WTC11 (cell line): ENCODE measurements at regions of chr17 and their contacts with region 1.

Region 1: DNA sequence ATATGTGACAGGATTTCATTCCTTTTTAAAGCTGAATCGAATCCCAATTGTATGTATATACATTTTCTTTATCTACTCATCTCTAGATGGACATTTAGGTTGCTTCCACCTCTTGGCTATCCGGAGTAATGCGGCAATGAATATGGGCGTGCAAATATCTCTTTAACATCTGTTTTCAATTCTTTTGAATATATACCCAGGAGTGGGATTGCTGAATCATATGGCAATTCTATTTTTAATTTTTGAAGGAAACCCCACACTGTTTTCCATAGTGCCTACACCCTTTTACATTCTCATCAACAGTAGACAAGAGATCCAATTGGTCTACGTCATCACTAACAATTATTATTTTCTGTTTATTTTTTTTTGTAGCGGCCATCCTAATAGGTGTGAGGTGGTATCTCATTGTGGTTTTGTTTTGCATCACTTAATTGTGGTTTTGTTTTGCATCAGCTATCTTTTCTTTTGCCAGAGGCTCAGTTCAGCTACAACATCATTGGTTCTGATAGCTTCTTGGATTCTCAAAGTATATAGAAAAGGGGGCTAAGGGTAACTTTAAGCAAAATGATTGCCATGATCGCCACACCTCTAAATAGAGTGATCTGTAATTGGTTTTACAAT is 25.6 kb upstream of the MAP2K6 start:
- DNase-seq: no peak
- ATAC-seq: no peak
- H3K4me3 Mint-ChIP-seq: no peak overlapping the region
- H3K27ac Mint-ChIP-seq: no peak overlapping the region
- H3K4me1 Mint-ChIP-seq: no peaks in the 10 kb centered on the region
- H3K27me3 Mint-ChIP-seq: no peaks in the 10 kb centered on the region
- CTCF ChIP-seq: no peak

Region 2: DNA sequence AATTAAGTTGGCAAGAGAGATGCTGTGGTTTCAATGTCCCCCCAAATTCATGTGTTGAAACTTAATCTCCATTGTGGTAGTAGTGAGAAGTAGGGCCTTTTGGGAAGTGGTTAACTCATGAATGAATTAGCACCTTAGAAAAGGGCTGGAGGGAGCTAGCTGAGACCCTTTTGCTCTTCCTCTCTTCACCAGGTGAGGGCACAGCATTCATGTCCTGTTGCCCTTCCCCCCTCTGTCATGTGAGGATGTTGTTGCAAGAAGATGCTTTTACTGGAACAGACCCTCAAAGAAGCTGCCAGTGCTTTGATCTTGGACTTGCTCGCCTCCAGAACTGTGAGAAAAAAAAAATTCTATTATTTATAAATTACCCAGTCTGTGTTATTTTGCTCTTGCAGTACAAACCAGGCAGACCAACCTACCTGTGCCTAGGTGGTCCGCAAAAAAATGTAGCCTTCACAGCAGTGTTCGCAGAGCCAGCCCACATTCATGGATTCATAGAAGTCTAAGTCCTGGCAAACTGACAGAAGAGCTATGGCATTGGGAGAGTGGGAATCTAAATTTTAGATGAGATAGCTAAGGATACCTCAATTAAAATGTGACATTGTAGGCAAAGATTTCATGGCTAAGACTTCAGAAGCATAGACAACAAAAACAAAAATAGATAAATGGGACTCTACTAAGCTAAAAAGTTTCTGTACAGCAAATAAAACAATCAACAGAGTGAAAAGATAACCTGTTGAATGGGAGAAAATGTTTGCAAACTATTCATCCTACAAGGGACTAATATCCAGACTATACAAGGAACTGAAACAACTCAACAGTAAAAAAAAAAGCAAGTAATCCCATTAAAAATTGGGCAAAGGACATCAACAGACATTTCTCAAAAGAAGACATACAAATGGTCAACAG is 30.0 kb before region 1 on chr17:
- CTCF ChIA-PET with region 1: interaction called, 31 read pairs
- POLR2A ChIA-PET with region 1: no interaction called
- DNase-seq: peak; percentile 55
- ATAC-seq: peak; percentile 98
- H3K4me3 Mint-ChIP-seq: no peak overlapping the region
- H3K27ac Mint-ChIP-seq: no peak overlapping the region
- H3K4me1 Mint-ChIP-seq: peaks cover 18% of the 10 kb centered on the region
- H3K27me3 Mint-ChIP-seq: no peaks in the 10 kb centered on the region
- CTCF ChIP-seq: no peak

Region 3: GRCh38 chr17:69404382-69404781 is 15.4 kb after region 1 on chr17:
- CTCF ChIA-PET with region 1: interaction called, 13 read pairs
- POLR2A ChIA-PET with region 1: no interaction called
- DNase-seq: no peak
- ATAC-seq: no peak
- H3K4me3 Mint-ChIP-seq: no peak overlapping the region
- H3K27ac Mint-ChIP-seq: no peak overlapping the region
- H3K4me1 Mint-ChIP-seq: no peaks in the 10 kb centered on the region
- H3K27me3 Mint-ChIP-seq: no peaks in the 10 kb centered on the region
- CTCF ChIP-seq: no peak

Region 4: DNA sequence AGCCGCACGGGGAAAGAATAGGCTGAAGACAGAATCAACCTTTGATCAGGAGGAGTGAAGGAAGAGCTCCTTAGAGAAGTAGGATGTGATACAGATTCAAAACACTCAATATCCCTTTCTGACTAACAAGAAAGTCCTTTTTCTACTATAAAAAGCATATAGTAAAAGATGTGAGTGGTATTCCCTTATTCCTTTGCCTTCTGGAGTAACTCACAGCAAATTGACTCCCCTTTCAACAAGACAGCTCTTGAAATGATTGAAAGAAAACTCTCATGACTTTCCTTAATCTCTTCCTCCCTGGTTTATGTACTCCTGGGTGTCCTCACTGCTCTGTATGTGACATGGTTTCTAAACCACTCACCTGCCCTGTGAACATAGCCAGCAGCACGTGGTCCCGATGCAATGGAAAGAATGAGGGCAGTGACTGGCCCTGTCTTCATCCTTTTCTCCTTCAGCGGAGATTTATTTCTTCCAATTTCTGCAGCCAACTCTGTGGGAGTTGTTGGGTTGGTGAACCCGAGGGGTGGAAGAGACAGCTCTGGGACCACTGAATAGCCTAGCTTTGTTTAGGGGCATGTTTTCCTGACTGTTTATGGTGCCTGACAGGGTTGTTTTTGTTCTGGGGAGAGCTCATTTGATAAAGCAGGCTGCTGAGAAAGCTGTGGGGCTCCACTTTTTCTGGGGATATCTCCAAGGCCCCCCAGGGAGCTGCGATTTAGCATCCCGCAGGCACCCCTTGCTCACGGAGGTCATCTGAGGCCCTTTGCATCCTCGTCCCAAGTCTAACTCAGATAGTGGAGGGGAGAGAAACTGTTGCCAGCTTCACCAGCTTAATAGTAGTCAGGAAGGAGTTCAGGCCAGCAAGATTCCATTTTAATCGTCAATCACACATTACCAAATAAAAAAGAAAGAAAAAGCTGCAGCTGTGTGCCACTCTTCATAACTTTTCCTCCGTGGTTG is 72.3 kb after region 1 on chr17:
- CTCF ChIA-PET with region 1: interaction called, 10 read pairs
- POLR2A ChIA-PET with region 1: no interaction called
- DNase-seq: no peak
- ATAC-seq: peak; percentile 35
- H3K4me3 Mint-ChIP-seq: no peak overlapping the region
- H3K27ac Mint-ChIP-seq: peak overlapping the region; percentile 75; the same call in 1 of the 2 replicates
- H3K4me1 Mint-ChIP-seq: peaks cover 69% of the 10 kb centered on the region
- H3K27me3 Mint-ChIP-seq: no peaks in the 10 kb centered on the region
- CTCF ChIP-seq: no peak